ENCODE measurements at regions of chr9 and their contacts with region 1.

Region 1: DNA sequence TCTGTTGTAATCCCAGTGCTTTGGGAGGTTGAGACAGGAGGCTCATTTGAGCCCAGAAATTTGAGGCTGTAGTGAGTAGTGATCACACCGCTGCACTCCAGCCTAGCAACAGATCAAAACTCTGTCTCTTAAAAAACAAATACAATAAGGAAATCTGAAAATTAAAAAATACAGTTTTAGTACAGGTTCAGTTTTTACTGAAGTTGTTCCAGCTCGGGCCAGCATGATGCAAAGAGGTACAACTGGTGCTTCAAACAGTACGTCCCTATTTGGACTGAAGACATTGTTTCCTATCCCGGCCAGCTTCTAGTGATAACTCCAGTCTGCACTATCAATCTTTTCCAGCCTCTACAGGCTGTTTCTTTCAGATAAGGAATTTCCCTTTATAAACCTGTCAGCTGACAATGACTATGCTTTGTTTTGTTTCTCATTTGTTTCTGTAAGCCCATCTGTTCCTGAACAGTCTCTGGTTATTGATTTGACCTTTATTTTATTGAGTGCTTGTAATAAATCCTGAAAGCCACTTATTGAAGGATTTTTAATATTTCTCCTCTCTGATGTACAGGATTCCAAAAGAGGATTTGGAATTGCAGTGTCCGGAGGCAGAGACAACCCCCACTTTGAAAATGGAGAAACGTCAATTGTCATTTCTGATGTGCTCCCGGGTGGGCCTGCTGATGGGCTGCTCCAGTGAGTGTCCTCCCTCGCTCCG is 41.9 kb downstream of the TJP2 start:
- DNase-seq: no peak
- H3K4me3 ChIP-seq: no peak overlapping the region
- H3K27ac ChIP-seq: no peak overlapping the region
- H3K4me1 ChIP-seq: no peaks in the 10 kb centered on the region
- H3K27me3 ChIP-seq: no peaks in the 10 kb centered on the region
- CTCF ChIP-seq: no peak

Region 2: GRCh38 chr9:69264526-69264925 is 48.6 kb after region 1 on chr9:
- CTCF ChIA-PET with region 1: no interaction called
- dilution Hi-C with region 1: no loop called
- in situ Hi-C with region 1: no loop called
- intact Hi-C with region 1: no loop called
- DNase-seq: no peak
- H3K4me3 ChIP-seq: no peak overlapping the region
- H3K27ac ChIP-seq: no peak overlapping the region
- H3K4me1 ChIP-seq: no peaks in the 10 kb centered on the region
- H3K27me3 ChIP-seq: no peaks in the 10 kb centered on the region
- CTCF ChIP-seq: no peak

Region 3: GRCh38 chr9:69279084-69279729 is 63.3 kb after region 1 on chr9:
- CTCF ChIA-PET with region 1: no interaction called
- dilution Hi-C with region 1: no loop called
- in situ Hi-C with region 1: loop called in 1 of 2 experiments (anchors 10 kb)
- intact Hi-C with region 1: no loop called
- DNase-seq: no peak
- H3K4me3 ChIP-seq: no peak overlapping the region
- H3K27ac ChIP-seq: no peak overlapping the region
- H3K4me1 ChIP-seq: no peaks in the 10 kb centered on the region
- H3K27me3 ChIP-seq: no peaks in the 10 kb centered on the region
- CTCF ChIP-seq: no peak

Region 4: DNA sequence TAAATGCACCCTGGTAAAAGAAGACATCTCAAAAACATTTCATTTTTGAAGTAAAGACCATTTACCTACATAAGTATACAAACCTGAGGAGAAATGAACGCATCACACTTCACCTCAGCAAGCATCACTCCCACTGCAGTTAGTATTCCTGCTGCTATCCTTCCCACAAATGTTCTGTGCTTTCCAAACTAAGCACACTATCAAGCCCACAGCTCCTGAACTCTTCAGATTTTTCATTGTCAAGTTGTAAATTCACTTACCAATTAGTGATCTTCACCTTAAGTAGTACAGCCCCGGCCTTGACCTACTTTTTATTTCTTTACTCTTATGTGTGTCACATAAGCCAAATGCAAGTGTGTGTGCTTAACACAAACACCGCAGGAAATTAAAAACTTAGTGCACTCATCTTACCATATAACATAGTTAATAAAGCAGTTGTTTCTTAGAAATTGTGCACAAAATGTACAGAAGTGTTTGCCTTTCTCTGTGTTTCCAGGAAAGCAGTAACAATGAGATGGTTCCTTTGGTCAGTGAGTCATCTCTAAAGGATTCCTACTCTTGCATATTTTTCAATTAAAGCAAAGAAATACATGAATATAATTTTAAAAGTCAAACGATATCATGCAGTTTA is 286.9 kb after region 1 on chr9:
- CTCF ChIA-PET with region 1: no interaction called
- dilution Hi-C with region 1: no loop called
- in situ Hi-C with region 1: no loop called
- intact Hi-C with region 1: no loop called
- DNase-seq: peak; percentile 4
- H3K4me3 ChIP-seq: no peak overlapping the region
- H3K27ac ChIP-seq: no peak overlapping the region
- H3K4me1 ChIP-seq: peaks cover 11% of the 10 kb centered on the region
- H3K27me3 ChIP-seq: no peaks in the 10 kb centered on the region
- CTCF ChIP-seq: no peak

Measured in mammary epithelial cell (primary cell).